PC-9 (cell line): ENCODE measurements at regions of chr2 and their contacts with region 1.

Region 1: GRCh38 chr2:149028377-149028776 is 10.1 kb upstream of the LYPD6B start:
- DNase-seq: no peak
- H3K4me3 ChIP-seq: no peak overlapping the region
- H3K27ac ChIP-seq: no peak overlapping the region
- H3K4me1 ChIP-seq: peaks cover 10% of the 10 kb centered on the region
- H3K27me3 ChIP-seq: no peaks in the 10 kb centered on the region
- CTCF ChIP-seq: no peak

Region 2: DNA sequence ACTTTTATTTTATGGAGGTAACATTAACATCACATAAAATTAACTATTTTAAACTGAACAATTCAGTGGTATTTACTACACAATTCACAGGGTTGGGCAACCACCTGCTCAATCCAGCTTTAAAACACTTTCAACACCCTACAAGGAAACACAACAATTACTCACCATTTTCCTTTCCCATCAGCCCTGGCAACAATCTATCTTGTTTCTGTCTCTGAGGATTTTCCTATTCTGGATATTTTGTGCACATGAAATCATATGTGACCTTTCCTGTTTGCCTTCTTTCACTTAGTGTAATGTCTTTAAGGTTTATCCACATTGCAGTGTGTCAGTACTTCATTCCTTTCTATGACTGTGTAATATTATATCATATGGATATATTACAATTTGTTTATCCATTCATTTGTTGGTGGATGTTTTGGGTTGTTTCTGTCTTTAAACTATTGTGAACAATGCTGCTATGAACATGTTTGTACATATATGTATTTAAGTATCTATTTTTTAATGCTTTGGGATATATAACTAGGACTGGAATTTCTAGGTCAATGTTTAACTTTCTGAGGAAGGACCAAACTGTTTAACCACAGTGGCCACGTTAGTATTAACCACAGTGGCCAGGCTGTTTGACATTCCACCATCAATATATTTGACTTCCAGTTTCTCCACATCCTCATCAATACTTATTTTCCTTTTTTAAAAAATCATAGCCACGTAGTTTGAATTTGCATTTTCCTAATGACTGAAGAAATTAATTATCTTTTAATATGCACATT is 225.7 kb before region 1 on chr2:
- CTCF ChIA-PET with region 1: interaction called, 10 read pairs
- POLR2A ChIA-PET with region 1: no interaction called
- intact Hi-C with region 1: no loop called
- DNase-seq: peak in 1 of 2 experiments; percentile 54
- H3K4me3 ChIP-seq: no peak overlapping the region
- H3K27ac ChIP-seq: no peak overlapping the region
- H3K4me1 ChIP-seq: no peaks in the 10 kb centered on the region
- H3K27me3 ChIP-seq: no peaks in the 10 kb centered on the region
- CTCF ChIP-seq: no peak

Region 3: GRCh38 chr2:149167411-149167810 is 139.0 kb after region 1 on chr2:
- CTCF ChIA-PET with region 1: no interaction called
- POLR2A ChIA-PET with region 1: no interaction called
- intact Hi-C with region 1: no loop called
- DNase-seq: peak in 1 of 2 experiments; percentile 69
- H3K4me3 ChIP-seq: no peak overlapping the region
- H3K27ac ChIP-seq: peak overlapping the region; percentile 34
- H3K4me1 ChIP-seq: peaks cover 56% of the 10 kb centered on the region
- H3K27me3 ChIP-seq: no peaks in the 10 kb centered on the region
- CTCF ChIP-seq: no peak